ENCODE measurements at regions of chr3 and their contacts with region 1.

Region 1: GRCh38 chr3:73324203-73325155 is 263.0 kb downstream of the EBLN2 start:
- DNase-seq: no peak
- H3K4me3 ChIP-seq: no peak overlapping the region
- H3K27ac ChIP-seq: peak overlapping the region; percentile 45
- H3K4me1 ChIP-seq: peaks cover under 1% of the 10 kb centered on the region
- H3K27me3 ChIP-seq: no peaks in the 10 kb centered on the region
- CTCF ChIP-seq: no peak
- POLR2A ChIP-seq: no peak

Region 2: GRCh38 chr3:73399106-73399505 is 74.6 kb after region 1 on chr3:
- intact Hi-C with region 1: loop called (anchors 10 kb)
- DNase-seq: no peak
- H3K4me3 ChIP-seq: no peak overlapping the region
- H3K27ac ChIP-seq: peak overlapping the region; percentile 64
- H3K4me1 ChIP-seq: peaks cover 30% of the 10 kb centered on the region
- H3K27me3 ChIP-seq: no peaks in the 10 kb centered on the region
- CTCF ChIP-seq: no peak
- POLR2A ChIP-seq: no peak

Measured in vagina (tissue), 2 donors.